ENCODE measurements at regions of chr5 and their contacts with region 1.

Region 1: GRCh38 chr5:100818340-100818739 is 84.7 kb downstream of the ST8SIA4 start:
- DNase-seq: no peak
- ATAC-seq: peak; percentile 67
- H3K4me3 ChIP-seq: no peak overlapping the region
- H3K27ac ChIP-seq: no peak overlapping the region; the same call in 1 of the 2 replicates
- H3K4me1 ChIP-seq: peaks cover 4% of the 10 kb centered on the region; the same call in 1 of the 2 replicates
- H3K27me3 ChIP-seq: no peaks in the 10 kb centered on the region
- CTCF ChIP-seq: no peak
- EP300 ChIP-seq: no peak
- POLR2A ChIP-seq: no peak
- RAD21 ChIP-seq: no peak

Region 2: DNA sequence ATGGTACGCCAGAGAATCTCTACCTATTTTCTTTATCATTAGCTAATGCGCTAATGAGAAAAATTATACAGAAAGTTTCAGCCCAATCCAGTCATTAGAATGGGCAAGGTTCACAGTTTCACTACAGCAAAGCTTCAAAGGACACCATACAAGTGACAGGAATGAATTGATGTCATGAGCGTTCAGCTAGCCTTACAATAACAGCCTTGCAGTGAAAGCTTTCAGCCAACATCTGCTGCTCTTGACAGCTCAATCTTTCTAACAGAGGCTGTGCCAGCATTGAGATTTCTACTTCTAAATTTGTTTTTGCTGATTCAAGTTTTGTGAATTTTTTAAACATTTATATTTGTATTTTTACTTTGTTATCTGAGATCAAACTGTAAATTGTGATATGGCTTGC is 585.6 kb before region 1 on chr5:
- CTCF ChIA-PET with region 1: no interaction called
- POLR2A ChIA-PET with region 1: no interaction called
- RAD21 ChIA-PET with region 1: no interaction called
- SMC1A ChIA-PET with region 1: no interaction called
- in situ Hi-C with region 1: no loop called
- intact Hi-C with region 1: no loop called
- DNase-seq: no peak
- ATAC-seq: no peak
- H3K4me3 ChIP-seq: no peak overlapping the region
- H3K27ac ChIP-seq: no peak overlapping the region
- H3K4me1 ChIP-seq: no peaks in the 10 kb centered on the region
- H3K27me3 ChIP-seq: no peaks in the 10 kb centered on the region
- CTCF ChIP-seq: no peak
- EP300 ChIP-seq: no peak
- POLR2A ChIP-seq: no peak
- RAD21 ChIP-seq: no peak

Region 3: DNA sequence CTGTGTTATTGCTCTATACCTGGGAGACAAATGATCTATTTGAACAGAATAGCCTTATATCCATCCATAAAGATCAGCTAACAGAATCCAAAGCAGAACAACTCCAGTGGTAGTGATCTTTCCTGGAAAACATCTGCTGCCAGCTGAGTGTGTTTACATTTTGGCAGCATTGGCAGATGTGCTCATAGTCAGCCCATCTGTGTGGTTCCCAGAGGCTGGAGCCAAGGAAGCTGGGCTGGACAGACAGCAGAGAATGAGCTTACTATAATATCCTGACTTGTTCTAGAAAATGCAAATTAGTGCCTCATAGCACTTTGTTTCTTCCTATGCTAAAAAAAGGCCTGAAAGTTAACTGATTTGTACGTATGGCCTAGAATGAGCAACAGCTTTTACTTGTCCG is 14.9 kb before region 1 on chr5:
- CTCF ChIA-PET with region 1: interaction called, 6 read pairs
- POLR2A ChIA-PET with region 1: interaction called, 5 read pairs
- RAD21 ChIA-PET with region 1: interaction called, 3 read pairs
- SMC1A ChIA-PET with region 1: interaction called, 21 read pairs
- in situ Hi-C with region 1: no loop called
- intact Hi-C with region 1: no loop called
- DNase-seq: no peak
- ATAC-seq: no peak
- H3K4me3 ChIP-seq: no peak overlapping the region
- H3K27ac ChIP-seq: no peak overlapping the region
- H3K4me1 ChIP-seq: no peaks in the 10 kb centered on the region
- H3K27me3 ChIP-seq: no peaks in the 10 kb centered on the region
- CTCF ChIP-seq: no peak
- EP300 ChIP-seq: no peak
- POLR2A ChIP-seq: no peak
- RAD21 ChIP-seq: no peak

Region 4: DNA sequence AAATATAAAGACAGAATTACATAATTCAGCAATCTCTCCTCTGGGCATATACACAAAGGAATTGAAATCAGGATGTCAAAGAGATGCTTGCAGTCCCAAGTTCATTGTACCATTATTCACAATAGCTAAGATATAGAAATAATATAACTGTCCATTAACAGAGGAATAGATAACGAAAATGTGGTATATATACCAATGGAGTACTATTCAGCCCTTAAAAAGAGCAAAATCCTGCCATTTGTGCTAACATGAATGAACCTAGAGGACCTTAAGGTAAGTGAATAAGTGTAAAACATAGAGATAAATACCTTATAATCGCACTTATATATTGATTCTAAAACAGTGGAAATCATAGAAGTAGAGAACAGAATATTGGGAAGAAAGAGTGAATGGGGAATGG is 77.7 kb after region 1 on chr5:
- CTCF ChIA-PET with region 1: interaction called, 12 read pairs
- POLR2A ChIA-PET with region 1: interaction called, 4 read pairs
- RAD21 ChIA-PET with region 1: interaction called, 25 read pairs
- SMC1A ChIA-PET with region 1: interaction called, 11 read pairs
- in situ Hi-C with region 1: no loop called
- intact Hi-C with region 1: no loop called
- DNase-seq: no peak
- ATAC-seq: no peak
- H3K4me3 ChIP-seq: no peak overlapping the region
- H3K27ac ChIP-seq: no peak overlapping the region
- H3K4me1 ChIP-seq: no peaks in the 10 kb centered on the region
- H3K27me3 ChIP-seq: no peaks in the 10 kb centered on the region
- CTCF ChIP-seq: no peak
- EP300 ChIP-seq: no peak
- POLR2A ChIP-seq: no peak
- RAD21 ChIP-seq: no peak